Cardiac septum (tissue), 1 donor: ENCODE measurements at regions of chr4 and their contacts with region 1.

Region 1: DNA sequence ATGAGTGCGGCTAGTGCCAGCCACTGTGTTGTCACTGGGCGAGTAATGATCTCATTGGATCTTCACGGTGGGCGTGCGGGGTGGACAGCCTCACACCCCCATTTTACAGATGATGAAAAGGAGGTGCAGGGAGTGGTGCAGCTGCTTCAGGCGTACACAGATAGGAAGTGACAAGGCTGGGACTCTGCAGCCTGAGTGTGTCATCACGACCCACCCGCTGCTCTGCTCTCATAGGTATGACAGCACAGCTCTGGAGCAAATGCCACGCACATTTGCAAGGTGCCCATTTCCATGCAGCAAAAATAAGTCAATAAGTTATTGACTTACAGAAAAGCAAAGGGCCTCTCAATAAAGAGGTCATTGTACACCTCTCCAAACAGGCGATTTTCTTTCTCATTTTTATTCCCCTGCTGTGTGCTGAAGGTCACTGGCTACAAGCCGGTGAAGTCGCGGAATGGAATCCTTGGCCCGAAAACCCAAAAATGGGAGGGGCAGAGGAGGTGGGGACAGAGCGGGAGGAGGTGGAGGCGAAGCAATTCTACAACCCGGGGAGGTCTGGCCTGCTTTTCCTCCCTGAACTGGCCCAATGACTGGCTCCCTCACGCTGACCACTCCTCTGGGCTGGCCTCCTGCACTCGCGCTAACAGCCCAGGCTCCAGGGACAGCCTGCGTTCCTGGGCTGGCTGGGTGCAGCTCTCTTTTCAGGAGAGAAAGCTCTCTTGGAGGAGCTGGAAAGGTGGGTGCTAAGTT is at the start of gene SOD3:
- DNase-seq: peak; percentile 90
- total RNA-seq, gene SOD3: 115 TPM

Region 2: DNA sequence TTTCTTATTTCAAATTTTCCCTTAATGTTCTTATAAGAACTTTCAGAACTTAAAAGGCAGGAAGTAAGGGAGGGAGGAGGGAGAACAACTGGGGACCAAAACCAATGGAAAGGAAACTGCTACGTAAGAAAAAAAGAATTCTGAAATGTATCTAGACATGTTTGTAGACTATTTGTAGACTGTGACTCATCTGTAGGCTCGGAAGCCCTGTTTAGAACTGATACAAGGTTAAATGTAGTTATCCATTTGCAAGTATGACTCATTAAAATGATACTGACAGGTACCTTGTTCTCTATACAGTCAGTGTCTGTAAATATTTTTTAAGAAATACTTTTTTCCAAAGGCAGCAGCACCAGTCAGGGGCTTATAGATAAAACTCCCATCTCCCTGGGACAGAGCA is 412.7 kb before region 1 on chr4:
- intact Hi-C with region 1: no loop called
- DNase-seq: no peak

Region 3: DNA sequence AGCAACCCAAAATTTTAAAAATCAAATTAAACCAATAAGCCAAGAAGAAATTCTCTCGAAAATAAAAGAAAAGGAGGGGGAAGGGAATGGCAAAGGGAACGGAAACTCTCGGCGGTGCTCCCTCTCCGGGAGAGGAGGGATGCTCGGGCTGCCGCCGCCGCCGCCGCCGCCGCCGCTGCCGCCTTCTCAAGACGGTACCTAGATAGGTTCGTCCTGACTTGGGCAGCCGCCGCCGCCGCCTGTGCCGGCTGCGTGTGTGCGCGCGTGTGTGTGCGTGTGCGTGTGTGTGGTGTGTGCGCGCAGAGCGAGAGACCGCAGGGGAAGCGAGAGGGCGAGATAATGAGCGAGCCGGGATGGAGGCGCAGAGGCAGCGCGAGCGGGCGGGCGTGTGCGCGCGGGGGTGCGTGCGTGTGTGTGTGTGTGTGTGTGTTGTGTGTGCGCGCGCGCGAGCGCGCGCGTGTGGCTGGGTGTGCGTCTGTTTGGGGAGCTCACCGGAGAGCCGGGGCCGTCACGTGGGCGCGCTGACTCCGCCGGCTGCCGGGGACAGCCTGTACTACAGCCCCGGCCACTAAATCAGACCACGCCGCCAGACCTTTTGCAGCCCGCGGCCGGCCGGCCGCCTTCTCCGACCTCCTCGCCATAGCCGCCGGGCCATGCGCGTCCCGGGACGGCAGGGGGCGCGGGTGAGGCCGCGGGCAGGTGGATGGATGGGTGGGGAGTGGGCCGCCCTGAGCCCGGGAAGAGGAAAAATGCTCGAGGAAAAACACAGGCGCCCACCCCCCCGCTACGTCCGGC is 322.4 kb before region 1 on chr4:
- intact Hi-C with region 1: loop called (anchors 5 kb)
- DNase-seq: peak; percentile 86

Region 4: DNA sequence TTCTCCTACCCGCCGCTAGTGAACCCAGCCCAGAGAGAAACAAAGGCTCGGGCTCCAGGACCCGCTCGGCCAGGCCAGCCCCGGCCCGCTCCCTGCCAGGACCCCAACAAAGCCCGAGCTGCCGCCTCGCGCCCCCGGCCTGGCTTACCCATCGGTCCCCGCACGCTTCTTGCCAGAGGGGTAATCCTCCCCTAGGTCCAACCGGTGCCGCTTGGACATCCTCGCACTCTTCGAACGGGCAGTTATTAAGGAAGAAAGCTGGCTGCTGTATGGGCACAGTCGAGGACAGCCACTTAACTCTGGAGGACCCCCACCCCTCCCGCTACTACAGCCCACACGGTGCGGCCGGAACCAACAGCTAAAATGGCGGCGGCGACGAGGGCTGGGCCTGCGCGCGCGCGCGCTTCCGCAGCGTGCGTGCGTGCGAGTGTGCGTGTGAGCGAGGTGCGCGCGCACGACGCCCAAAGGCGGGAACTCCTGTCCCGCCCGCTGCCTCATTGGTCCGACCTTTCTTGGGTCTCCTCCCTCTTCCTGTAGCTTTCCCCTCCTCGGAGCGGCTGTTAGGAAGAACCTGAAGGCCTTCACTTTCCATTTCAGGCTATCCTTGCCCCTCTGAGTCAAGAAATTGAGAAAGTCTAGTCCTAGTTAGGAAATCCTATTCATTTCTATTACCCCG is 210.8 kb before region 1 on chr4 and contains the start of gene DHX15:
- intact Hi-C with region 1: loop called (anchors 10 kb)
- DNase-seq: peak; percentile 97
- total RNA-seq, gene DHX15: 62.6 TPM

Region 5: GRCh38 chr4:24736066-24736465 is 59.0 kb before region 1 on chr4:
- intact Hi-C with region 1: loop called (anchors 5 kb)
- DNase-seq: no peak

Region 6: GRCh38 chr4:24856586-24856985 is 61.5 kb after region 1 on chr4:
- intact Hi-C with region 1: loop called (anchors 5 kb)
- DNase-seq: no peak

Region 7: DNA sequence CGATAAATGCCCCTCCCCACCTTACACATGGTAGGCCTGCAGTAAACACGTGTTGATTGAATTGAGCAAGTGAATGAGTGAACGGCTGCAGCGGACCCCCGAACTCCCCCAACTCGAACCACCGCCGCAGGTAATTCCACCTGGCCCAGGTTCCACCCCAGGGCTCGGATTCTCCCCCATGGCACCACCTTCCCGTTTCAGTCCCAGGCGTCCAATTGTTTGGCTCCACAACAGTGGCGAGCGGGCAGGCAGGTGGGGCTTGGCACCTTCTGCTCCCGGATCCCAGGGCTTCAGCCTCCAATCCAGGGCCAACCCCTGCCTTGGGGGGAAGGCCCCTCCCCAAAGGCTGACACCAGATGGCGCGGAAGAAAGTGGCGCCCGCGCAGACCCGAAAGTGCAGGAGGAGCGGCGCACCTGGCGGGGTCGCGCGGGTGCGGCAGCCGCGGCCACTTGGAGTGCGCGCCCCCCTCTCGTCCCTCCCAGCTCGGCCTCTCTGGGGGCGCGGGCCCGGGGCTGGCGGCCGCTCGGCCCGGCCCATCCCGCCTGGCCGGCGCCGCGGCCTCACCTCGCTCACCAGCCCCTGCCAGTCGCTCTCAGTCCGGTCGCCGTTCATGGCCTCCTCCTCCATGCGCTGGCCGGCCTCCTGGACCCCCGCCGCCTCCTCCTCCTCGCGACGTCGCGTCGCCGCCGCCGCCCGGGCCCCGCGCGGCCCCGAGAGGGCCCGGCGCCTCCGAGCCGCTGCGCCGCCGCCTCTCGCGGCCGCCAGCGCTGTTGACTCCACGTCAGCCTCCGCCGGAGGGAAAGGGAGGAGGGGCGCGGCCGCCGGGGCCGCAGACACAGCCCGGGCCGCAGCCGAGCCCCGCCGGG is 117.4 kb after region 1 on chr4 and contains the start of gene CCDC149:
- intact Hi-C with region 1: loop called (anchors 5 kb)
- DNase-seq: peak; percentile 80
- total RNA-seq, gene CCDC149: 11.7 TPM